Dendritic cell treated with granulocyte-macrophage colony-stimulating factor and Interleukin-4, amounts not matched to agents 40 ng/mL and 50 ng/mL, for 4 days (primary cell): ENCODE measurements at regions of chr3 and their contacts with region 1.

Region 1: DNA sequence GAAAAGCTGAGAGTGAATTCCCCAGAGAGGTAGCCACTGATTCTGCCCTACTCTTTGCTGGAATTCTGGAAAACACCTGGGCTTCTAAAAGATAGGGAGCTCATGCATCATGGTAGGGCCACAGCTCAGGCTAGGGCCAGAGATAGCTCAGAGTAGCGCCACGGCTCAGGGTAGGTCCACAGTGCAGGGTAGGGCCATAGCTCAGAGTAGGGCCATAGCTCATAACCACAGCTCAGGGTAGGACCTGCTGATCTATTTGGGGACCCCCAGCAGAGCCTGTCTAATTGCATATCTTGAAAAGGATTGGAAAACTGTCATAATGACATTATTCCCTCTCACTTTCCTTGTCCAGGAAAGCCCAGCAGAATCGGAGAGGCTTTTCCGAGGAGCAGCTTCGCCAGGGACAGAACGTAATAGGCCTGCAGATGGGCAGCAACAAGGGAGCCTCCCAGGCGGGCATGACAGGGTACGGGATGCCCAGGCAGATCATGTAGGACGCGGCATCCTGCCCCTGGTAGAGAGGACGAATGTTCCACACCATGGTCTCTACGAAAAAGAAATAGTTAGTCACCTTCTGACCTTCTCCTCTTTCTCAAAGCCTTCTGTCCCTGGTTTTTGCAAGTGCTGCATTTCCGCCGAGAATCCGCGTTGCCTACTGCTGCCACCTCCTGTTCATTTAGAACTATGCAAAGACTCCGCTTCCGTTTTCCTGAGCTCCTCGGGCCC is 14.5 kb downstream of the TAGLN3 start:
- H3K4me3 Mint-ChIP-seq: no peak overlapping the region
- H3K27ac Mint-ChIP-seq: no peak overlapping the region
- H3K4me1 Mint-ChIP-seq: peaks cover 12% of the 10 kb centered on the region
- H3K27me3 Mint-ChIP-seq: peaks cover 1% of the 10 kb centered on the region

Region 2: GRCh38 chr3:111989061-111989678 is 24.1 kb before region 1 on chr3:
- intact Hi-C with region 1: loop called (anchors 2 kb)
- H3K4me3 Mint-ChIP-seq: no peak overlapping the region
- H3K27ac Mint-ChIP-seq: no peak overlapping the region
- H3K4me1 Mint-ChIP-seq: peaks cover 19% of the 10 kb centered on the region
- H3K27me3 Mint-ChIP-seq: no peaks in the 10 kb centered on the region

Region 3: GRCh38 chr3:112097378-112097777 is 84.2 kb after region 1 on chr3:
- intact Hi-C with region 1: no loop called
- H3K4me3 Mint-ChIP-seq: no peak overlapping the region
- H3K27ac Mint-ChIP-seq: no peak overlapping the region
- H3K4me1 Mint-ChIP-seq: peaks cover 9% of the 10 kb centered on the region
- H3K27me3 Mint-ChIP-seq: peaks cover 59% of the 10 kb centered on the region